ENCODE measurements at regions of chr12 and their contacts with region 1.

Region 1: GRCh38 chr12:120228291-120229070 is 27.6 kb upstream of the RPLP0 start:
- DNase-seq: peak; percentile 93
- H3K4me3 Mint-ChIP-seq: peak overlapping the region; percentile 53
- H3K27ac Mint-ChIP-seq: peak overlapping the region; percentile 86
- H3K4me1 Mint-ChIP-seq: peaks cover 86% of the 10 kb centered on the region
- H3K27me3 Mint-ChIP-seq: no peaks in the 10 kb centered on the region

Region 2: GRCh38 chr12:120199595-120200306 is 28.7 kb before region 1 on chr12:
- CTCF ChIA-PET with region 1: interaction called, 76 read pairs
- POLR2A ChIA-PET with region 1: interaction called, 13 read pairs
- DNase-seq: no peak
- H3K4me3 Mint-ChIP-seq: peak overlapping the region; percentile 98
- H3K27ac Mint-ChIP-seq: peak overlapping the region; percentile 98
- H3K4me1 Mint-ChIP-seq: peaks cover 53% of the 10 kb centered on the region
- H3K27me3 Mint-ChIP-seq: no peaks in the 10 kb centered on the region

Region 3: GRCh38 chr12:120216742-120217605 is 11.5 kb before region 1 on chr12:
- CTCF ChIA-PET with region 1: interaction called, 26 read pairs
- POLR2A ChIA-PET with region 1: no interaction called
- DNase-seq: no peak
- H3K4me3 Mint-ChIP-seq: no peak overlapping the region
- H3K27ac Mint-ChIP-seq: no peak overlapping the region
- H3K4me1 Mint-ChIP-seq: no peaks in the 10 kb centered on the region
- H3K27me3 Mint-ChIP-seq: no peaks in the 10 kb centered on the region

Region 4: DNA sequence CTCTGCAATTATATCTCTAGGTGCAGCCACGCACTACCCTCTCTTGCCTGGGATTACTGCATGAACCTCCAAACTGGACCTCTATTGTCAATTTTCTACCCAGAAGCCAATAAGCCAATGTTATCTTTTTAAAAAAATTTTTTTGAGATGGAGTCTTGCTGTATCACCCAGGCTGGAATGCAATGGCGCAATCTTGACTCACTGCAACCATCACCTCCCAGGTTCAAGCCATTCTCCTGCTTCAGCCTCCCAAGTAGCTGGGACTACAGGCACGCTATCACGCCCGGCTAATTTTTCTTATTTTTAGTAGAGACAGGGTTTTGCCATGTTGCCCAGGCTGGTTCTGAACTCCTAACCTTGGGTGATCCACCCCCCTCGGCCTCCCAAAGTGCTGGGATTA is 48.3 kb after region 1 on chr12:
- CTCF ChIA-PET with region 1: interaction called, 11 read pairs
- POLR2A ChIA-PET with region 1: no interaction called
- DNase-seq: no peak
- H3K4me3 Mint-ChIP-seq: no peak overlapping the region
- H3K27ac Mint-ChIP-seq: no peak overlapping the region
- H3K4me1 Mint-ChIP-seq: no peaks in the 10 kb centered on the region
- H3K27me3 Mint-ChIP-seq: peaks cover 2% of the 10 kb centered on the region

Region 5: GRCh38 chr12:120292661-120293531 is 64.4 kb after region 1 on chr12 and contains the start of gene RNU4-1:
- CTCF ChIA-PET with region 1: interaction called, 48 read pairs
- POLR2A ChIA-PET with region 1: interaction called, 24 read pairs
- DNase-seq: peak; percentile 86
- H3K4me3 Mint-ChIP-seq: no peak within 1 kb of the TSS
- H3K27ac Mint-ChIP-seq: no peak within 1 kb of the TSS
- H3K4me1 Mint-ChIP-seq: peaks cover 12% of the 10 kb centered on the region
- H3K27me3 Mint-ChIP-seq: peaks cover 6% of the 10 kb centered on the region
- total RNA-seq, gene RNU4-1: 672 to 1,846 TPM

Region 6: GRCh38 chr12:120474444-120474943 is 246.0 kb after region 1 on chr12:
- CTCF ChIA-PET with region 1: no interaction called
- POLR2A ChIA-PET with region 1: no interaction called
- DNase-seq: no peak
- H3K4me3 Mint-ChIP-seq: no peak overlapping the region
- H3K27ac Mint-ChIP-seq: no peak overlapping the region
- H3K4me1 Mint-ChIP-seq: peaks cover 16% of the 10 kb centered on the region
- H3K27me3 Mint-ChIP-seq: peaks cover 3% of the 10 kb centered on the region